ENCODE measurements at regions of chr1 and their contacts with region 1.

Region 1: GRCh38 chr1:218521375-218522169 is 176.4 kb downstream of the TGFB2 start:
- H3K4me3 Mint-ChIP-seq: no peak overlapping the region
- H3K27ac Mint-ChIP-seq: peak overlapping the region; percentile 51
- H3K4me1 Mint-ChIP-seq: peaks cover 25% of the 10 kb centered on the region
- H3K27me3 Mint-ChIP-seq: peaks cover 26% of the 10 kb centered on the region

Region 2: DNA sequence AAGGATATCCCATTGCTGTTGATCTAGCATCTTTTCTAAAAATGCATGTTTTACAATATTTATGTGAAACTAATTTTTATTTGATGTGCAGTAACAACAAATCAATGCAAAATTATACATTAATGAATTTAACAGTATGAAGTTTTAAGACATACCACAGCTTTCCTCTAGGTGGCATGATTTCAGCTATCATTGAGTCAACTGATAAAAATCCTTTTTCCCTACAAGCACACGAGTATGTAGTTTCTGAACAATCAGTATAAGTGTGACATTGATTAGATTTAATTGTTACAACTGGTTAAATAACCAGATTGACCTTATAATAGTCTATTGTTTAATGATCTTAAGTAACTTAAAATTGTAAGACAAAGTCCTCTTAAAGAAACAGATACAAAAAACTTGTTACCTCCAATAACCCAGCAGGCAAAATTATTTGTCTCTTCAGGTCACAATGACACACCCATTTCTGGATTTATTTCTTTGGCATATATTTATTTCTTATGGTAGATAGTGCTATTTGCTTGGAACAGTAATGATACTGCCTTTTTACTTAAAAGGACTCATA is 182.2 kb before region 1 on chr1:
- intact Hi-C with region 1: loop called (anchors 1 kb)
- H3K4me3 Mint-ChIP-seq: no peak overlapping the region
- H3K27ac Mint-ChIP-seq: no peak overlapping the region
- H3K4me1 Mint-ChIP-seq: no peaks in the 10 kb centered on the region
- H3K27me3 Mint-ChIP-seq: peaks cover 8% of the 10 kb centered on the region

Region 3: GRCh38 chr1:218361298-218362065 is 160.1 kb before region 1 on chr1:
- intact Hi-C with region 1: loop called (anchors 5 kb)
- H3K4me3 Mint-ChIP-seq: no peak overlapping the region
- H3K27ac Mint-ChIP-seq: no peak overlapping the region
- H3K4me1 Mint-ChIP-seq: peaks cover 9% of the 10 kb centered on the region
- H3K27me3 Mint-ChIP-seq: peaks cover 21% of the 10 kb centered on the region

Region 4: GRCh38 chr1:219576931-219577730 is 1055.6 kb after region 1 on chr1:
- intact Hi-C with region 1: loop called (anchors 10 kb)
- H3K4me3 Mint-ChIP-seq: no peak overlapping the region
- H3K27ac Mint-ChIP-seq: no peak overlapping the region
- H3K4me1 Mint-ChIP-seq: peaks cover 33% of the 10 kb centered on the region
- H3K27me3 Mint-ChIP-seq: peaks cover 4% of the 10 kb centered on the region

Measured in dendritic cell treated with granulocyte-macrophage colony-stimulating factor and Interleukin-4, amounts not matched to agents 40 ng/mL and 50 ng/mL, for 4 days (primary cell).